ENCODE measurements at regions of chr2 and their contacts with region 1.

Region 1: GRCh38 chr2:177717831-177718618 is 325.5 kb downstream of the AGPS start:
- H3K4me3 Mint-ChIP-seq: no peak overlapping the region
- H3K27ac Mint-ChIP-seq: no peak overlapping the region
- H3K4me1 Mint-ChIP-seq: no peaks in the 10 kb centered on the region
- H3K27me3 Mint-ChIP-seq: no peaks in the 10 kb centered on the region

Region 2: DNA sequence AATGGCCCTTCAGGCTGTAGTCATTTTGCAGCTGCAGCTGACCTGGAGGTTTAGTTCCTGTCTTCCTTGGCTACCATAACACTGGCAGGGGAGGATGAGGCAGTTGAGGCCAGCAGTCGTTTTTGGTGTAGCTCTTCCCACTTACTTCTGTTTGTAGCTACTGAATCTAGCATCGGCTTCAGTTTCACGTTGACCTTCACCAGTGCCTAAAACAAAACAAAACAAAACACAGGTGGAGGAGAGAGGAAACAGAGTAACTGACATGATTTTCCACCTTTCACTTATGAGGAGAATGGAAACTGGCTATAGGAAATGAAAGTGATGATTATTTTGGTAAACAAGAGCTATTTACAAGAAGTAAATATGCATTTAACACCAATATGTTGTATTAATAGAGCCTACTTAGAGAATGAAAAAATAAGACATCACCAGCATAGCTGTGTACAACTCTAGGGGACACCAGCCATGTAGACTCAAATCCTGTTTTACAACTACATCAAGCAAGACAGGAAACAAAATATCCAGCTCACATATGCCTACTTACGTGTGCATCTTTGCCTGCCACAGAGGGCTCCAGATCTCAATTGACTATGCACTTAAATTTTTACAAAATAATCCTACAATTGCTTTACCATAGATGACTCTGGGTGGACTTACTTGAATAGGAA is 88.5 kb before region 1 on chr2:
- intact Hi-C with region 1: no loop called
- H3K4me3 Mint-ChIP-seq: no peak overlapping the region
- H3K27ac Mint-ChIP-seq: no peak overlapping the region
- H3K4me1 Mint-ChIP-seq: no peaks in the 10 kb centered on the region
- H3K27me3 Mint-ChIP-seq: peaks cover 6% of the 10 kb centered on the region

Region 3: DNA sequence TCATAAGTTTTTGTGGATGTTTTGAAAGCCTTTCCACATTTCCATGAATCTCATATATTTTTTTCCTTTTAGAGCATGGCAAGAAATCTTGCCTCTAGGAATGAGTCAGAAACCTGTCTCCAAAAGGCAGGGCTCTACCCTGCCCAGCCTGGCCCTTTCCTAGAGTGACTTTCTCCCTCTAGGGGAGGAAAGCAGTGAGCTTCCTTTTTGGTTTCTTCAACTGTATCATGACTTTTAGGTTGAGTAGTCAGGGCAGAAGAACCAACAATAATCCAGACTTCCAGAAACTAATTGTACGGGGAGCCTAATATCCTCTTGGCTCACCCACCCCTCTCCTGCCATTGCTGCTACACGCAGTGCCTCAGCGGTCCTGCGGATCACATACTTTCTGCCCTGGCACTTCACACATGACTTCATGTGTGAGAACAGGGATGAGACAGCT is 25.2 kb before region 1 on chr2:
- intact Hi-C with region 1: no loop called
- H3K4me3 Mint-ChIP-seq: no peak overlapping the region
- H3K27ac Mint-ChIP-seq: no peak overlapping the region
- H3K4me1 Mint-ChIP-seq: no peaks in the 10 kb centered on the region
- H3K27me3 Mint-ChIP-seq: no peaks in the 10 kb centered on the region

Region 4: DNA sequence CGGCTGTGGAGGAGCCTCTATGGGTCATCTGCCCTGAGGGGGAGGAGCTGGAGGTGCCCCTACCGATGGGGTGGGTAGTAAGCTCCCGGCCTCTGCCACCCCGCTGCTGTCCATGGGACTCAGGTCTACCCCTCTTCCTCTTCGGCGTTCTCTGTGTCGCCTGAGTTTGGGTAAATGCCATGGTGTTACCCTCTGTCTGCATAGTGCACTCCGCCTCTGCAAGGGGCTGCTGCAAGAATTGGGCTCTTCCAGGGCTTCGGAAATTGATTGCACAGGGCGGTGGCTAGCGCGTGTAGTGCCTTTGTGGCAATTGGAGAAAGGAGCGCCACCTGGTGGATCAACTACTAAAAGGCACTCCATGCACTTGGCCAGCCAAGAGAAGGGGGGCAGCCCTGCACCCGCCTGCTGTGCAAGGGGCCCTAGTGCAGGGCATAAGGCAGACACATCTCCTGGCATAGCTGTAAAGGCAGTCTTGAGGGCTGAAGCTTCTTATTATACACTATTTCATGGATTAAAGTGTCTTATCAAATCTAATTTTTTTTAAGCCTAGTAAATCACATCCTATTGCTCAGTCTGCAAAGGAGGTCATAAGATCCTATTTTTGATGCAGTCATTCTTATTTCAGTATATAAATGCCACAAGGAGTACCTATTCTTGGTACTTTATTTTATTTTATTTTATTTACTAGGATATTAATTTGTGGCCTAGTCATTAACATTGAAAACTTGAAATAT is 45.7 kb after region 1 on chr2:
- intact Hi-C with region 1: loop called (anchors 10 kb)
- H3K4me3 Mint-ChIP-seq: peak overlapping the region; percentile 27
- H3K27ac Mint-ChIP-seq: no peak overlapping the region
- H3K4me1 Mint-ChIP-seq: peaks cover 6% of the 10 kb centered on the region
- H3K27me3 Mint-ChIP-seq: peaks cover 12% of the 10 kb centered on the region